AG04449 (cell line): ENCODE measurements at regions of chr16 and their contacts with region 1.

Region 1: DNA sequence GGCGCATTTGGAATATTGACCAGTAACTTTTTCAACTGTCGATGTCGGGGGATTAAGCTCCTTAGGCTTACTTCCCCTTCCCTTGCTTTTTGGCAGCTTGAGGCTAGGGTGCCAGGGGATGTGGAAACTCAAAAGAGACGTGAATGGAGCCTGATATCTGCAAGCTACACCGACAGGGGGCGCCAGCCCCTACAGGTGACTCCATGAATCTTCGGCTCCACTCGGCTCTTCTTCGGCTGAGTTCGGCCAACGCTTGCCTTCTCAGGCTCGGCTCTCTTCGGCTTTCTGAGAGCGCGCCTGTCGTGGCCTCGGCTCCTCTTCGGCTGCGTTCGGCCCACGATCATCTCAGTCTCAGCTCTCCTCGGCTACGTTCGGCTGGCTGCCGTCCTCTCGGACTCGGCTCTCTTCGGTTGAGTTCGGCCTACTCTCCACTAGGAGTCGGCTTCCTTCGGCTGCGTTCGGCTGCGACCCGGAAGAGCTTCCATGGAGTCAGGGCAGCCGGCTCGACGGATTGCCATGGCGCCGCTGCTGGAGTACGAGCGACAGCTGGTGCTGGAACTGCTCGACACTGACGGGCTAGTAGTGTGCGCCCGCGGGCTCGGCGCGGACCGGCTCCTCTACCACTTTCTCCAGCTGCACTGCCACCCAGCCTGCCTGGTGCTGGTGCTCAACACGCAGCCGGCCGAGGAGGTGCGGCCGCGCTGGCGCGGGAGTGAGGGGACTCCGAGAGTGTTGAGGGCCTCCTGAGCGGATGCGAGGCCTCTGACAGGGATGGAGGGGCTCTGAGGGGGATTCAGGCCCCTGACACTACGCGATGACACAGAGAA is at the start of gene ERCC4:
- DNase-seq: peak; percentile 94
- H3K4me3 ChIP-seq: peak within 1 kb of the TSS; percentile 99
- CTCF ChIP-seq: peak; percentile 87

Region 2: DNA sequence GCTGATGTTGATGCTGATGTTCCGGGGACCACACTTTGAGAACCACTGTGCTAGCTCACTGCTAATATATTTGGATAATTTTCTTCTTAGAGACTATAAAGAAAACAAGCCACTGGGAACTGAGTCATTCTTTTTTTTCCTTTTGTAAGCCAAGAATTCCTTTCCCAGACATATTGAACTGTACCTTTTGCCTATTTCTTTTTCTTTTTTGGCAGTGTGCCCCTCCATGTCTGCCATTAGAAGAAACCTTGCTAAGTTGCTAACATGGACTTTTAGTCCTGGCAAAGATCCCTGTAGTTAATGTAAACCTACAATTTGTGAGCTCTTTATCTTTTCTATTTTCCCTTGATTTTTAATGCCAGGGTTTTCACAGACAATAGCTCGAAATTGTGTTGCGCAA is 17.2 kb before region 1 on chr16:
- CTCF ChIA-PET with region 1: interaction called, 72 read pairs
- POLR2A ChIA-PET with region 1: no interaction called
- DNase-seq: no peak
- H3K4me3 ChIP-seq: no peak overlapping the region
- CTCF ChIP-seq: no peak

Region 3: DNA sequence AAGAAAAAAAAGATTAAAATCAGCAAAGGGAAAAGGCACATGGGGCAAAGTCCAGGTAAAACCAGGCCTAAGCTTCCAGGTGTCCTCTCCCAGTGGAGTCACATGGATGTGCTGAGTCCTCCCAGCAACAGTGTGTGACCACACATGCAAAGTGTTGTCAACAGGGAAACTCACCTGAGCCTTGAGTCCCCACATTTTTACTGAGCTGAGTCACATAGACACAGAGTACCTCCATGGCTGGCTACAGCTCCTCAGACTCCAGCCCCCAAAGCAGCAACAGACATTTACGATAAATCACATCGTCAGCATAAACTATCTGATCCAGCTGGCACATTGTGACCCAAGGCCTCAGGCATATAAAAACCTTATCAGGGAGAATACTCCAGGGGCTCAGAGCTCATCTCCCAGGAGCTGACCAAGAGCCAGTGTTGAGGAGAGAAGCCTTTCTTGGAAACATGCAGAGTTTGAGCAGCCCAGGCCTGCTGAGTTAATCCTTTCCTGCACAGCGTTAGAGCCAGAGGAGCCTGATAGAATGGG is 20.6 kb after region 1 on chr16:
- CTCF ChIA-PET with region 1: interaction called, 30 read pairs
- POLR2A ChIA-PET with region 1: no interaction called
- DNase-seq: no peak
- H3K4me3 ChIP-seq: no peak overlapping the region
- CTCF ChIP-seq: no peak

Region 4: GRCh38 chr16:14121142-14121541 is 201.2 kb after region 1 on chr16:
- CTCF ChIA-PET with region 1: no interaction called
- POLR2A ChIA-PET with region 1: no interaction called
- DNase-seq: no peak
- H3K4me3 ChIP-seq: no peak overlapping the region
- CTCF ChIP-seq: no peak

Region 5: DNA sequence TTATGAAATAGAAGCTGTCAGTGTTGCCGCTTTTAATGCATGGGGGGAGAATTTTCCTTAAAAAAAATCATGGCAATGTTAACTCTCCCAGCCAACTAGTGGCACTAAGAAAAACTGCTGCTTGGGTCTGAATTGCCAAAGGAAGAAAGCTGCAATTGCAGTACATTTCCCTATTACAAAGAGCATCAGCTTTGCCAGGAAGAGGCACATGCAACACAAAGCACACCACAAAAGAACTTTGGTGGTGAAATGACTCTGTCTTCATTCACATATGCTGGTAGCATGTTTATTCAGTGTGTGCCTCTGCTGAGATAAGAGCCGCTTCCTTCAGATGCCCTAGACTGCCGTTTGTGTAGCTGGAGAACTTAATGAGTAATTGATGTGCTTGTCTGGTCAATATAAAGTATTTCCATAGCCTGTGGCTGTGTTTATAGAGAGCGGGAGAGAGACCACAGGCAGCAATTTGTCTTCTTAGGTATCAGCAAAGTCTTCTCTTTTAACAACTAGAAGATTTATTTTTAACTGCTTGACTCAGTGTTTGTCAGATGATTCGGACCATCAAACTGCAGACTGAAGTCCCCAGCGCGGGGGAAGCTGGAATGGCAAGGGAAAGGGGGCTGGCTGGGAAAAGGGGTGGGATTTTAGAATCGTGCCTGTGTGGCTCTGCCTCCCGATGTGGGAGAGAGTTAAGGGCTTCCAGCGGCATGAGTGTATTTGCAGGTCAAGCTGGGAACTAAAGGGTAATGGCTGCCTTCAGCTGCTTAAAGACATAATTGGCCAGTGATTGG is 266.3 kb after region 1 on chr16:
- CTCF ChIA-PET with region 1: interaction called, 27 read pairs
- POLR2A ChIA-PET with region 1: no interaction called
- DNase-seq: no peak
- H3K4me3 ChIP-seq: peak overlapping the region; percentile 58
- CTCF ChIP-seq: peak; percentile 47

Region 6: GRCh38 chr16:14249291-14250032 is 329.6 kb after region 1 on chr16:
- CTCF ChIA-PET with region 1: interaction called, 33 read pairs
- POLR2A ChIA-PET with region 1: no interaction called
- DNase-seq: no peak
- H3K4me3 ChIP-seq: no peak overlapping the region
- CTCF ChIP-seq: peak; percentile 71

Region 7: DNA sequence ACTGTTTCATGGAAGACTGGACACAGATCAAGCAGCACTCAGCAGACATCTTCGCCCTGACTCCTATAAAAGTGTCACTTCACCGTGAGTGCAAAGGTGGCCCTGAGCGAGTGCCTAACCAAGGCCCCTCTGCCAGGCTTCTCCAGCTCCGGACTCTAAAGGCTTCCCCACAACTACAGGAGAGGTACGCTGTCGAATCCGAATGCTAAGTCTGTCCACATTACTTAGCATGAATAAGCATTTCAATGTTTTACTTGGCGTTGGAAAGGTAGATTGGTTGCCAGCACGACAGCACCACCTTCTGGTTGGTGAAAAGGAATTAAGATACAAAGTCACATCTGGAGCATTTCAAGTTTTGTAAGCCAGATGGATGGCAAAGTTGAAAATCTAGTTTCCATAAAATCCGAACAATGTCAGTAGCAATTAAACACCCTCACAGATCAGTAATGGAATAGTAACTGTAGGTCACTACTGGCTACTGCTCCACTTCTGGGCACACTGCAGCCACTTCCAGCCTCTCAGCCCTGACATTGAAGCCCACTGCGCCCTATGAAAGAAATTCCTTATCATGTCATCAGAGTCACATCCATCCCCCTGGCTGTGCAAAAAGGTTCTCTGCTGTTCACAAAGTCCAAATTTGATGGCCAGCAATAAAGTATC is 609.2 kb after region 1 on chr16:
- CTCF ChIA-PET with region 1: interaction called, 14 read pairs
- POLR2A ChIA-PET with region 1: interaction called, 3 read pairs
- DNase-seq: peak; percentile 76
- H3K4me3 ChIP-seq: peak overlapping the region; percentile 32
- CTCF ChIP-seq: peak; percentile 43